ENCODE measurements at regions of chr1 and their contacts with region 1.

Region 1: DNA sequence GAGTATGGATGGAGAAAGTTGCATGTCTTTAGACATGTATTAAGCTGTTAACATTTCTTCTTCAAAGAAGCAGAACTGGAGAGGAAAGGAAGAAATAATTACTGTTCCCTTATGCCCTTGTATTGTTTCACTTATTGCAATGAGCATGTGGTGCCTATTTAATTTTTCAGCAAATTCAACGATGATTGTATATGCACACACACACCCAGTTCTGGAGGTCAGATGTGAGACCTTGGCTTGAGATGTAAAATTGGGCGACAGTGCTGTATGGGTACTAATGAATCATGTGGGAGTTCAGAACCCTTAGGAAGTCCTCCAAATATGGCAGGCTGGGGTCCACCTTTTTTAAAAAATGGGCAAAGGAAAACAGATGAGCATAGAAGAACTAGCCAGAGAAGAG is 27.5 kb downstream of the BRINP2 start:
- DNase-seq: no peak
- H3K4me3 ChIP-seq: no peak overlapping the region
- CTCF ChIP-seq: no peak

Region 2: DNA sequence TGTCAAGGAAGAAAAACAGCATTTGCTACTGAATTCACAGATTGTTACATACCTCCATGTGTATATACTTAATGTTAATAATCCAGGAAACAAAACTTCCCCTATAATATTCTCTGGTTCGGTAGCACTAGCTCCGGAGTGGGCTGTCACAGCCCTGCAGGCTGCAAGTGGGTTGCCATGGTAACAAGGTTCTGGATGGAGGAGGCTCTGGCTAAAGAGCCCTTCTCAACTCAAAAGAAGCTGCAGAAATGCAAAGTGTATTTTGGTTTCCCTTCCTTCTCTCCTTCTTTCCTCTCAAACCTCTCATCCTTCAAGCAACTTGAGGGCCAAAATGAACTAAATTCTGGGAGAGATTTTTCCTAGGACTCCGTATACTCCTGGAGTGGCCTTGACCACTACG is 78.9 kb before region 1 on chr1:
- in situ Hi-C with region 1: no loop called
- DNase-seq: no peak
- H3K4me3 ChIP-seq: no peak overlapping the region
- CTCF ChIP-seq: no peak

Region 3: DNA sequence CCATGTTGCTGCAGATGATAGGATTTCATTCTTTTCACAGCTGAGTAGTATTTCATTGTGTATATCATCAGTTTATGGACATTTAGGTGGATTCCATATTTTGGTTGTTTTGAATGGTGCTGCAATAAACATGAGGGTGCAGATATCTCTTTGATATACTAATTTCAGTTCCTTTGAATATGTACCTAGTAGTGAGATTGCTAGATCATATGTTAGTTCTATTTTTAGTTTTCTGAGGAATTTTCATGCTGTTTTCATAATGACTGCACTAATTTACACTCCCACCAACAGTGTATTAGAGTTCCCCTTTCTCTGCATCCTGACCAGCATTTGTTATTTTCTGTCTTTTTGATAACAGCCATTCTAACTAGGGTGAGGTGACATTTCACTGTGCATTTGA is 54.6 kb after region 1 on chr1:
- in situ Hi-C with region 1: loop called (anchors 5 kb)
- DNase-seq: no peak
- H3K4me3 ChIP-seq: no peak overlapping the region
- CTCF ChIP-seq: no peak